OCI-LY7 (cell line): ENCODE measurements at regions of chr2 and their contacts with region 1.

Region 1: GRCh38 chr2:32063310-32064161 is at the start of gene SPAST:
- DNase-seq: peak; percentile 98
- H3K4me3 ChIP-seq: peak within 1 kb of the TSS; percentile 85
- H3K27ac ChIP-seq: peak within 1 kb of the TSS; percentile 89
- H3K4me1 ChIP-seq: peaks cover 33% of the 10 kb centered on the region
- CTCF ChIP-seq: peak; percentile 48
- total RNA-seq, gene SPAST: 24.5 and 26.4 TPM in 2 replicates

Region 2: GRCh38 chr2:31997653-31998052 is 65.9 kb before region 1 on chr2:
- CTCF ChIA-PET with region 1: no interaction called
- POLR2A ChIA-PET with region 1: no interaction called
- intact Hi-C with region 1: no loop called
- DNase-seq: peak; percentile 19
- H3K4me3 ChIP-seq: no peak overlapping the region
- H3K27ac ChIP-seq: no peak overlapping the region
- H3K4me1 ChIP-seq: peaks cover 10% of the 10 kb centered on the region
- CTCF ChIP-seq: no peak

Region 3: GRCh38 chr2:32010670-32011484 is 52.7 kb before region 1 on chr2 and contains the start of gene MEMO1:
- CTCF ChIA-PET with region 1: no interaction called
- POLR2A ChIA-PET with region 1: interaction called, 12 read pairs
- intact Hi-C with region 1: loop called (anchors 1 kb)
- DNase-seq: peak; percentile 98
- H3K4me3 ChIP-seq: peak within 1 kb of the TSS; percentile 100
- H3K27ac ChIP-seq: peak within 1 kb of the TSS; percentile 90
- H3K4me1 ChIP-seq: peaks cover 28% of the 10 kb centered on the region
- CTCF ChIP-seq: 0 out of 2 replicates have a peak, but pooled peaks have one; percentile 10
- total RNA-seq, gene MEMO1: 24.0 and 27.1 TPM in 2 replicates

Region 4: GRCh38 chr2:32039447-32040219 is 23.9 kb before region 1 on chr2 and contains the start of gene DPY30:
- CTCF ChIA-PET with region 1: interaction called, 3 read pairs
- POLR2A ChIA-PET with region 1: interaction called, 52 read pairs
- intact Hi-C with region 1: loop called (anchors 1 kb)
- DNase-seq: peak; percentile 95
- H3K4me3 ChIP-seq: peak within 1 kb of the TSS; percentile 75
- H3K27ac ChIP-seq: peak within 1 kb of the TSS; percentile 52
- H3K4me1 ChIP-seq: peaks cover 11% of the 10 kb centered on the region
- CTCF ChIP-seq: peak; percentile 19; the same call in 1 of the 2 replicates
- total RNA-seq, gene DPY30: 47.9 and 52.4 TPM in 2 replicates

Region 5: DNA sequence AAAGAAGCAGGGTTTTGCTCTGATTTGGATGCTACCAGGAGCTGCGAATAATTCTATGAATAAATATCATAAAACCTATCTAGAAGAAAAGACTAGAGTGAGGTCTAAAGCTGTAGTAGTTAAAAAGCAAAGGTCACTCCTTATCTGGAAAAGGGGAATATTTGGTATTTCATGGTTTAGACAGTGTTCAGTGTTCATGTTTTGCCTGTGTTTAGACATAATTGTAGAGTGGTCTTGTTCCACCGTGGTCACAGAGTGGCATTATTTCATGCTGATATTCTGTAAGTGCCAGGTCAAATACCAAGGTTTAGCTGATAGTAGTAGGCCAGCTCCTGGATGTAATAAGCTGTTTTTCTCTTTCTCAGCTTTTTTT is 10.6 kb after region 1 on chr2:
- CTCF ChIA-PET with region 1: no interaction called
- POLR2A ChIA-PET with region 1: interaction called, 17 read pairs
- intact Hi-C with region 1: loop called (anchors 2 kb)
- DNase-seq: no peak
- H3K4me3 ChIP-seq: no peak overlapping the region
- H3K27ac ChIP-seq: no peak overlapping the region
- H3K4me1 ChIP-seq: no peaks in the 10 kb centered on the region
- CTCF ChIP-seq: no peak

Region 6: DNA sequence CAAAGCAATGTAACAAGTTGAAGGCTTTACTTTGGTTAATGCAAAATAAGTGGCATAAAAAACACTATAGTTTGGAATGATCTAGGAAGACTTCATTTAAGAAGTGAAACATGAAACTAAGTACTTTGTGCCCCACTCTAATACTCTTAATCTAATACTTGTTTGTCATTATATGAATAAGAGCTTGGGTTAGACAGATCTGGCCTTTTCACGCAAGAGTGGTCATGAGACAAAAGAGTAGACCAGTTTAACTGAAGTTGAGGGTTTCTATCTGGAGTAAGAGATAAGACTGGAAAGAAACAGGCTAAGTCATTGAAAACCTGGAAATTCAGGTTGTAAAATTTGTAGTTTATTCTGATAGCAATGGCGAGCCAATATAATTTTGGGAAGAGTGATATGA is 105.0 kb after region 1 on chr2:
- CTCF ChIA-PET with region 1: no interaction called
- POLR2A ChIA-PET with region 1: interaction called, 22 read pairs
- intact Hi-C with region 1: loop called (anchors 1 kb)
- DNase-seq: peak; percentile 28
- H3K4me3 ChIP-seq: peak overlapping the region; percentile 8
- H3K27ac ChIP-seq: peak overlapping the region; percentile 4
- H3K4me1 ChIP-seq: peaks cover 30% of the 10 kb centered on the region
- CTCF ChIP-seq: no peak

Region 7: DNA sequence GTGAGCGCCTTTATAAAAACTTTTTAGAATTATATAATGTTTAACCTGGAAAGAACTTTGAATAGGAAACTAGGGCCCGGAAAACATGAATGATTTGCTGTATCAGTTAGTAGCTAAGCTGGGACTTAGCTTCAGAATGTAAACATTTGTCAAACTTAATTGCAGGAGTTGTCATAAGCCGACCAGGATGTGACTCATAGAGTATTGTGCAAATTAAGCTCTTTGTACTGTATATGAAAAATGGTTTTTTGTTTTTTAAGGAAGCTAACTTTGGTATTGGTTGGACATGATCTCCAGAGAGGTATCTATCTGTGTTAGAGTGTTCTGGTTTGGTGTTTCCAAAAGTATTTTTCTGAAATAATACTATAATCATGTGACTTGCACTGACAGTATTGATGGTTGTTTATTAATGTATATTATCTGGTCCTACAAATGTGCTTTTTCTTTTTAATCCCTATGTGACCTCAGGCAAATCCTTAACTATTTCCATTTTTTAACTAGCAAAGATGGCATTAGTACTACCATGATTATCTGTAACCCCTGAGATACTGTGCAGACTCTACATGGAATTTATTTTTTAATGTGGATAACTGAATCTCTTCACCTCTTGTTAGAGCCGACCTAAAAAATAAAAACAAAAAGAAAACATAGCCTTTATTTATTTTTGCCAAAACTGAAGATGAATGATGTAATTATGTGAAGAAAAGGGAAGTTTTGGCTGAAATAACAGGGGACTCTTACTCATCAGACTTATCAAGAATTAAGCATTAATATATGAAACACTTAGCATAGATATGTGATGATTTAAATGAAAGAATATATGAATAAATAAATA is 225.8 kb after region 1 on chr2:
- CTCF ChIA-PET with region 1: no interaction called
- POLR2A ChIA-PET with region 1: no interaction called
- intact Hi-C with region 1: no loop called
- DNase-seq: no peak
- H3K4me3 ChIP-seq: no peak overlapping the region
- H3K27ac ChIP-seq: no peak overlapping the region
- H3K4me1 ChIP-seq: no peaks in the 10 kb centered on the region
- CTCF ChIP-seq: no peak

Region 8: DNA sequence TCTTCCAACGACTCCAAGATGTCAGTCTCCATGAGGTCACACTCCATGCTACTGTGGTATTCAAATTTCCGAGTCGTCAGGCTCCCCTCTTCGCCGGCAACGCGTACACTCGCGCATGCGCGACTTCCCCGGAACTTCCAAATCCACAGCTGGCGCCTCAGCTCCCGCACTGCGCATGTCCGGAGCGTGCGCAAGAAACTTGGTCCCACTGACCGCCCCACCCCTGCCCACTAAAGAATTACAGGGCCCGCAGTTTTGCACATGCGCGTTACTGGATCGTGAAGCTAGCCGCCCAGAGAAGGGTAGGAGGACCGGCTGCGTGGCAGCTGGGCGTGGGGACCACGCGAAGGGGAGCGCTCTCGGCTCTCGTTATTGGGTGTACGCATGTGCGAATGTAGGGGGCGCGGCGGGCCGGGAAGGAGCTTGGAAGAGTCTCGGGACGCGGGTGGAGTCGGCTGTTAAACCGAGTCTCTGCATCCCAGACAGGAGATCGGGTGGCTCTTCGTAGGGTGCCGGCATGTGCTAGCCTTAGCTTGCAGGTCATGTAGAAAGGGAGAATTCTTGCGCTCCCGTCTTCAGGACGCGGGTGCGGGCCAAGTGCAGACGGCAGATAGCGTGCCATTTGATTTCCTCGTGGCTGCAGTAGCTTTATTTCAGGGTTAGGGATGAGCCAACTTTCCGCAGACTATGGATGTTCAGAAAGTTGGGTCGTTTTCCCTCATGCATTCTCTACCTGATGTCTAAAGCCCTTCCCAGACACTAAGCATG is 1535.8 kb after region 1 on chr2 and contains the start of gene FAM98A:
- CTCF ChIA-PET with region 1: no interaction called
- POLR2A ChIA-PET with region 1: no interaction called
- intact Hi-C with region 1: loop called (anchors 5 kb)
- DNase-seq: peak; percentile 99
- H3K4me3 ChIP-seq: peak within 1 kb of the TSS; percentile 93
- H3K27ac ChIP-seq: peak within 1 kb of the TSS; percentile 51
- H3K4me1 ChIP-seq: peaks cover 19% of the 10 kb centered on the region
- CTCF ChIP-seq: no peak; the same call in 1 of the 2 replicates
- total RNA-seq, gene FAM98A: 33.2 and 35.7 TPM in 2 replicates